CD8-positive, alpha-beta T cell (primary cell): ENCODE measurements at regions of chr2 and their contacts with region 1.

Region 1: GRCh38 chr2:2916621-2917020 is 461.0 kb downstream of the EIPR1 start:
- DNase-seq: no peak
- ATAC-seq: no peak
- H3K4me3 ChIP-seq: no peak overlapping the region
- H3K4me3 Mint-ChIP-seq: no peak overlapping the region
- H3K27ac ChIP-seq: no peak overlapping the region
- H3K27ac Mint-ChIP-seq: no peak overlapping the region
- H3K4me1 ChIP-seq: no peaks in the 10 kb centered on the region
- H3K4me1 Mint-ChIP-seq: no peaks in the 10 kb centered on the region
- H3K27me3 ChIP-seq: no peaks in the 10 kb centered on the region
- H3K27me3 Mint-ChIP-seq: peaks cover 7% of the 10 kb centered on the region
- CTCF ChIP-seq: no peak

Region 2: GRCh38 chr2:2879781-2880180 is 36.8 kb before region 1 on chr2:
- CTCF ChIA-PET with region 1: no interaction called
- POLR2A ChIA-PET with region 1: no interaction called
- intact Hi-C with region 1: no loop called
- DNase-seq: no peak
- ATAC-seq: no peak
- H3K4me3 ChIP-seq: no peak overlapping the region
- H3K4me3 Mint-ChIP-seq: no peak overlapping the region
- H3K27ac ChIP-seq: no peak overlapping the region
- H3K27ac Mint-ChIP-seq: no peak overlapping the region
- H3K4me1 ChIP-seq: no peaks in the 10 kb centered on the region
- H3K4me1 Mint-ChIP-seq: no peaks in the 10 kb centered on the region
- H3K27me3 ChIP-seq: no peaks in the 10 kb centered on the region
- H3K27me3 Mint-ChIP-seq: no peaks in the 10 kb centered on the region
- CTCF ChIP-seq: no peak

Region 3: DNA sequence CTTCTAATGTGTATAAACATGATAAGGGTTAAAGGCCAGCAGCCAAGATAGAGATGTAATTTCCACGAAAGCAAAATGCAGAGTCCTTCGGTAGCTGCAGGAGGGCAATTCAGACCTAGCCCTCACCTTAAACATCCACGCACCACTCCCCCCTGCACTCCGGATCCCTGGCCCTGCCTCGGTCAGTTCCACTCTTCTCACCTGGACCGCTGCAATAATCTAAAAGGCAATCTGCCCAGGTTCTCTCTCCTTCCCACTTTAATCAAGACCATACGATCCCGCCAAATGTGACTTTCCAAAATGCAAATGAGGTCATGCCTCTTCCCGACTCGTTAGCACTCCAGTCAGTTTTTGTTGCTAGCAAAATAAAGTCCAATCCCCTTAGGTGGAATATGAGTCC is 24.2 kb before region 1 on chr2:
- CTCF ChIA-PET with region 1: no interaction called
- POLR2A ChIA-PET with region 1: no interaction called
- intact Hi-C with region 1: loop called in 1 of 2 experiments (anchors 1 kb)
- DNase-seq: peak in 1 of 9 experiments; percentile 13
- ATAC-seq: no peak
- H3K4me3 ChIP-seq: no peak overlapping the region
- H3K4me3 Mint-ChIP-seq: no peak overlapping the region
- H3K27ac ChIP-seq: no peak overlapping the region
- H3K27ac Mint-ChIP-seq: no peak overlapping the region
- H3K4me1 ChIP-seq: no peaks in the 10 kb centered on the region
- H3K4me1 Mint-ChIP-seq: no peaks in the 10 kb centered on the region
- H3K27me3 ChIP-seq: no peaks in the 10 kb centered on the region
- H3K27me3 Mint-ChIP-seq: peaks cover 5% of the 10 kb centered on the region
- CTCF ChIP-seq: no peak